GM12878 (cell line): ENCODE measurements at regions of chr3 and their contacts with region 1.

Region 1: DNA sequence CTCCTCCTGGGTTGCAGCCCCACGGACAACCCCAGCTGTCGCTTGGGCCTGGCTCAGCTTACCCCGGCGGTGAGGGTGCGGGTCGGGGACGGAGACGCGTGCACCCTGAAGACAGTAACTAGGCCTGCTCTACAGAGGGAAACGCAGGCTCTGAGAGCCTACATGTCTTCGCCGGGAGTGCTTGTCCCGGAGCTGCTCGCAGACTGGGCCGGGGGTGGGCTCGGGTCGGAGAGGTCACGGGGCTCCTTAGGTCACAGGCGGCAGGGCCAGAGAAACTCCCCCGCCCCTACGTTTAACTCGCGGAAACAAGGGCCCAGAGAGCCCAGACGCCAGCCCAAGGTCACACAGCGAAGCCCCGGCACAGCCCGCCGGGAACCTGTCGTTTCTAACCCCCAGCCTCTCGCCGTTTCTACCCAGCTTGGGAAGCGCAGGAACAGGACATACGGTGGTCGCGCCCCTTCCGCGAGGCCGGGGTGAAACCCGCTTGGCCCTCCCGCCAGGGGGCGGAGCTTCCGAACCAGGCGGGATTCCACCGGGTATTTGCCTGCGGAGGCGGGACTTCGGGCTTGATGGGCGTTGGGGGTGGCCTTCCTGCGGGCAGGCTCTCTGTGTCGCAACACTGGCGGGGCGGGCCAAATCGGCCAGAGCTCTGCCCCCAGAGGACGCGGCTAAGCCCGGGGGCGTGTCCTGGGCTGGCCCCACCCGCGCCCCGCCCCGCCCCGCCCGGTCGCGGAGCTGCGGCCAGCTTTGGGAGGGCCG is at the start of gene HDAC11:
- DNase-seq: peak; percentile 81
- ATAC-seq: peak; percentile 99
- H3K4me3 ChIP-seq: peak within 1 kb of the TSS; percentile 82
- H3K27ac ChIP-seq: peak within 1 kb of the TSS; percentile 45
- H3K4me1 ChIP-seq: peaks cover 3% of the 10 kb centered on the region; the same call in 1 of the 2 replicates
- H3K27me3 ChIP-seq: no peaks in the 10 kb centered on the region; a peak in 2 of 4 replicates
- CTCF ChIP-seq: no peak; a peak in 1 of 6 replicates
- EP300 ChIP-seq: no peak
- POLR2A ChIP-seq: peak; percentile 87
- RAD21 ChIP-seq: no peak
- polyA plus RNA-seq, gene HDAC11: 0.04 TPM in 1 of 2 experiments, not detected in the other

Region 2: GRCh38 chr3:13427662-13428603 is 51.8 kb before region 1 on chr3:
- CTCF ChIA-PET with region 1: no interaction called
- POLR2A ChIA-PET with region 1: no interaction called
- RAD21 ChIA-PET with region 1: no interaction called
- SMC1A ChIA-PET with region 1: no interaction called
- in situ Hi-C with region 1: no loop called
- intact Hi-C with region 1: no loop called
- DNase-seq: no peak
- ATAC-seq: peak; percentile 61
- H3K4me3 ChIP-seq: no peak overlapping the region
- H3K27ac ChIP-seq: no peak overlapping the region
- H3K4me1 ChIP-seq: no peaks in the 10 kb centered on the region
- H3K27me3 ChIP-seq: no peaks in the 10 kb centered on the region
- CTCF ChIP-seq: no peak
- EP300 ChIP-seq: no peak
- POLR2A ChIP-seq: no peak
- RAD21 ChIP-seq: no peak

Region 3: DNA sequence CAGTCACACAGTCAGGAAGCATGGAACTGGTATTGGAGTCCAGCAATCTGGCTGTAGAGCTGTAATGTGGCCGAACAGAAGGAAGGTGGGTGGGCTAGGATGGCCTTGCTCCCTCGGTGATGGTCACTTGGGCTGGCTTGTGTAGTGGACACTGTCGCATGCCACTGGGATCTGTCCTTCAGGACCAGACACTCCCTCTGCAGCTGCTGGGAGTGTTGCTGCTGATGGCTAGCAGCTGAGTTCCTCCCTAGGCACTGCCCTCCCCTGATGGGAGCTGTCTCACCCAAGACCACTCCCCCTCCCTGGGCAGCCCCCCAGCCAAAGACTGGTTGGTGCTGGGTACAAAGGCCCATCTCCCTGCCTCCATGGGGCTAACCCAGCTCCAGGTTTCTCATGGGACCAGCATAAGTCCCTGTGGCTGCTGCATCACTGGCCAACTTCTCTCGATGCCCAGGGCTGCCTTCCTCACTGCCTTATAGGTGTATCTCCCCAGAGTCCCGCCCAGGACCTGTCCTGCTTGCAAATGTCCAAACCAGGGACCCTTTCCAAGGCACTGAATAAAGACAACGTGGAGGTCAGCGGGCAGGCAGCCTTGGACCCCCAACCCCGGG is 351.7 kb after region 1 on chr3:
- CTCF ChIA-PET with region 1: no interaction called
- POLR2A ChIA-PET with region 1: no interaction called
- RAD21 ChIA-PET with region 1: no interaction called
- SMC1A ChIA-PET with region 1: no interaction called
- in situ Hi-C with region 1: no loop called
- intact Hi-C with region 1: loop called (anchors 5 kb)
- DNase-seq: no peak
- ATAC-seq: no peak
- H3K4me3 ChIP-seq: no peak overlapping the region
- H3K27ac ChIP-seq: no peak overlapping the region
- H3K4me1 ChIP-seq: no peaks in the 10 kb centered on the region
- H3K27me3 ChIP-seq: peaks cover 0 to 4% of the 10 kb centered on the region in 2 experiments; a peak in 1 of 4 replicates
- CTCF ChIP-seq: no peak
- EP300 ChIP-seq: no peak
- POLR2A ChIP-seq: no peak
- RAD21 ChIP-seq: no peak